ENCODE measurements at regions of chr4 and their contacts with region 1.

Region 1: GRCh38 chr4:165493359-165493758 is 114.6 kb downstream of the CPE start:
- DNase-seq: peak; percentile 88
- ATAC-seq: peak; percentile 98
- H3K4me3 Mint-ChIP-seq: peak overlapping the region; percentile 55
- H3K27ac Mint-ChIP-seq: no peak overlapping the region
- H3K4me1 Mint-ChIP-seq: peaks cover 24% of the 10 kb centered on the region
- H3K27me3 Mint-ChIP-seq: peaks cover 3% of the 10 kb centered on the region; the same call in 1 of the 2 replicates
- CTCF ChIP-seq: peak; percentile 53; the same call in 1 of the 2 replicates

Region 2: GRCh38 chr4:165131247-165131832 is 362.0 kb before region 1 on chr4:
- CTCF ChIA-PET with region 1: interaction called, 26 read pairs
- POLR2A ChIA-PET with region 1: no interaction called
- DNase-seq: peak; percentile 86
- ATAC-seq: peak; percentile 87
- H3K4me3 Mint-ChIP-seq: no peak overlapping the region
- H3K27ac Mint-ChIP-seq: no peak overlapping the region
- H3K4me1 Mint-ChIP-seq: no peaks in the 10 kb centered on the region
- H3K27me3 Mint-ChIP-seq: no peaks in the 10 kb centered on the region
- CTCF ChIP-seq: peak; percentile 87

Region 3: DNA sequence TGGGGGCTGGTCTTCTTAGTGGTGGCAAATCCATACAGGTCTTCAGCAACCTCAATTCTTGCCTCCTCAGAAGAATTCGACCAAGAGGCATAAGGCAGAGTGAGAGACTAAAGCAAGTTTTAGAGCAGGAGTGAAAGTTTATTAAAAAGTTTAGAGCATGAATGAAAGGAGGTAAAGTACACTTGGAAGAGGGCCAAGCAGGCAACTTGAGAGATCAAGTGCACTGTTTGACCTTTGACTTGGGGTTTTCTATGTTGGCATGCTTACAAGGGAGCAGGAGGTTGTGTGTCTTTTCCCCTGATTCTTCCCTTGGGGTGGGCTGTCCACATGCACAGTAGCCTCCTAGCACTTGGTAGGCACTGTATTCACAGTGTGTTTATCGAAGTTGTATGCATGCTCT is 23.4 kb before region 1 on chr4:
- CTCF ChIA-PET with region 1: no interaction called
- POLR2A ChIA-PET with region 1: no interaction called
- DNase-seq: no peak
- ATAC-seq: no peak
- H3K4me3 Mint-ChIP-seq: no peak overlapping the region
- H3K27ac Mint-ChIP-seq: no peak overlapping the region
- H3K4me1 Mint-ChIP-seq: no peaks in the 10 kb centered on the region
- H3K27me3 Mint-ChIP-seq: peaks cover 4% of the 10 kb centered on the region; the same call in 1 of the 2 replicates
- CTCF ChIP-seq: no peak

Region 4: DNA sequence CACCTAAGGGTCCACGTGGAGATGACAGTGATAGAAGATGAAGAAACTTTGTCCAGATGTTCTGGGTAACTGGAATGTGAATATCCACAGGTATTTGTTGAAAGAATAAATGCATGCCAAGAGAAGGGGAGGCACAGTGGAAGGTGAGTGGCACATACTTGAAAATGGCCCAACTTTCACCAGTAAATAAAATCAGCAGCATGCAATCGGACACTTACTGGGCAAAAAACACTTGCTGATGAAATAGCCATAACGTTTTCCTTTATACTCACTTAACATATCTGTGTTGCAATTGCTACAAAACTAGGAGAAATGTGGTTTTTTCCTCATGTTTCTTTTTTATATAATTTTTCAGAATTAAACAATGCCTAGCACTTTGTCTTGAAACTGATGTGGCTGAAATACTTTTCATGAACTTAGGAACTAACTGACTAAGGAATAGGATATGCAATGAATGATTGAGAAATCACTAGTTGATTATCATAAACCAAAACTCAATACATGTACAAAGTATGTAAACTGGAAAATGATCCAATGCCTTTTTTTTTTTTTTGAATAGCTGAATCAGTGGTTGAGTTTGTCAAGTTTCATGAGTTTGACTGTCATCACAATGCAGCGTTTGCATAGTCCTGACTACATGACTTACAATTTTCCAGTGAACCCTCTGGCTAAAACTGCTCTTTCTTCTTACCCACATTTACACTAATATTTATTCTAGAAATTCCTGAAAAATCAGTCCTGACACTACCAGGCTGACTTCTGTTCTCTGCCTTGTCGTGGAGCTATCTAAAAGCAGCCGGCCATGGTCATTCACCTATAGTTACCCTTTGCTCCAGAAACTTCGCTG is 12.9 kb after region 1 on chr4:
- CTCF ChIA-PET with region 1: interaction called, 26 read pairs
- POLR2A ChIA-PET with region 1: no interaction called
- DNase-seq: no peak
- ATAC-seq: no peak
- H3K4me3 Mint-ChIP-seq: no peak overlapping the region
- H3K27ac Mint-ChIP-seq: no peak overlapping the region
- H3K4me1 Mint-ChIP-seq: no peaks in the 10 kb centered on the region
- H3K27me3 Mint-ChIP-seq: no peaks in the 10 kb centered on the region
- CTCF ChIP-seq: no peak

Region 5: DNA sequence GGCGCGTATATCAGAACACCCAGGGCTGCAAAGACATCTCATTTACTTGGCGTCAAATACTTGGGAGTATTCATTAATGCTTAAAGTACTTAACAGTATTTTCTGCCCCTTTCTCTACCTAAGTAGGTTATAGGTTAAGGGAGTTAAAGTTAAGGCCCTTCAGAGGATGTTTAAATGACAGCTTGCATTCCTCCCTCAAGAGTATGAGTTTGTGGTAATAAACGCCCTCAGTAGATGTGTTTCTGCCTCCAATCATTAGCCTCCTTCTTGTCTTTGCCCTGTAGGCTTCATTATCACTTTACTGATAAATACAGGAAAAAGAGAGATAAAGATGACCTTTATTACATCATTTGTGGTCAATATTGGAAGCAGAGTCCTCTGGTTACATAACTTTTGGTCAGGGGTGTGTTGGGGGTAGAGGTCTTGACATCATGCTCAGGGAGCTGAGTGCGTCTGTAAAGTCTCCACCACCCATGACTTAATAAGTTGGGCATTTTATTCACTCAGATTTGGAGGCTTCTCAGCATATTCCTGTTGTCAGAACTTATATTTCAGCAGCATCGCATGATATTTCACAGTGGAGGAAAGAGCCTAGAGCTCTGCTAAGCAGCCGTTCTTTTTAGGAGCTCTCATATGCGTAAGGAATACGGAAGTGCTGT is 31.3 kb after region 1 on chr4:
- CTCF ChIA-PET with region 1: interaction called, 46 read pairs
- POLR2A ChIA-PET with region 1: no interaction called
- DNase-seq: no peak
- ATAC-seq: no peak
- H3K4me3 Mint-ChIP-seq: no peak overlapping the region
- H3K27ac Mint-ChIP-seq: no peak overlapping the region
- H3K4me1 Mint-ChIP-seq: no peaks in the 10 kb centered on the region
- H3K27me3 Mint-ChIP-seq: no peaks in the 10 kb centered on the region
- CTCF ChIP-seq: no peak

Region 6: GRCh38 chr4:165872461-165873297 is 379.3 kb after region 1 on chr4 and contains the start of gene TLL1:
- CTCF ChIA-PET with region 1: interaction called, 13 read pairs
- POLR2A ChIA-PET with region 1: no interaction called
- DNase-seq: peak; percentile 18
- ATAC-seq: no peak
- H3K4me3 Mint-ChIP-seq: peak within 1 kb of the TSS; percentile 82
- H3K27ac Mint-ChIP-seq: no peak within 1 kb of the TSS
- H3K4me1 Mint-ChIP-seq: peaks cover 22% of the 10 kb centered on the region
- H3K27me3 Mint-ChIP-seq: peaks cover 59% of the 10 kb centered on the region
- CTCF ChIP-seq: no peak
- total RNA-seq, gene TLL1: 0.46 to 0.98 TPM (median 0.63 TPM) in 3 replicates

Region 7: DNA sequence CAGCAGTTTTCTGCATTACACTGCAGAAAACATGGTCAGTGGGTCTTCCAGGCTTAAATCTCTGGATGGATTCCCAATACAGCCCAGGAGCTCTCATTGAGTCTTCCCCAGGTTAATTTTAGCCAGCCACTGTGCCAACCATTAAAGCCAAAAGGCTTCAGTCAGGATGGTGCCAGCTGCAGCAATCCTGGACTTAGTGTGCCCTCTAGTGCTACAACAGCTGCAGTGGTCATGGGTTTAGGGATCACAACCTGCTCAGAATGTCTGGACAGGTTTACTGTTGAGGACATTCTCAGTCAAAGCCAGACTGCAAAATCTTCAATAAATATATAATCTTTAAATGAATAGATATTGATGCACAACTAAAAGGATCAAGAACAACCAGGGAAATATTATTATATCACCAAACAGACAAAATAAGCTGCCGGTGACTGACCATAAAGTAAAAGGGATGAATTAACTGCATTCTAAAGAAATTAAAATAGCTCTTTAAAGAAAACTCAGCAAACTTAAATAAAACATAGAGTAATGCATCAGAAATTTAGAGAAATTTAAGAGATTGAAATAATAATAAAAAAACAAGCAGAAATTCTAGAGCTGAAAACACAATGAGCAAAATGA is 1101.1 kb after region 1 on chr4:
- CTCF ChIA-PET with region 1: interaction called, 12 read pairs
- POLR2A ChIA-PET with region 1: no interaction called
- DNase-seq: peak; percentile 70
- ATAC-seq: peak; percentile 100
- H3K4me3 Mint-ChIP-seq: no peak overlapping the region
- H3K27ac Mint-ChIP-seq: no peak overlapping the region
- H3K4me1 Mint-ChIP-seq: peaks cover 11% of the 10 kb centered on the region
- H3K27me3 Mint-ChIP-seq: no peaks in the 10 kb centered on the region
- CTCF ChIP-seq: peak; percentile 61; the same call in 1 of the 2 replicates